ENCODE measurements at regions of chr1 and their contacts with region 1.

Region 1: DNA sequence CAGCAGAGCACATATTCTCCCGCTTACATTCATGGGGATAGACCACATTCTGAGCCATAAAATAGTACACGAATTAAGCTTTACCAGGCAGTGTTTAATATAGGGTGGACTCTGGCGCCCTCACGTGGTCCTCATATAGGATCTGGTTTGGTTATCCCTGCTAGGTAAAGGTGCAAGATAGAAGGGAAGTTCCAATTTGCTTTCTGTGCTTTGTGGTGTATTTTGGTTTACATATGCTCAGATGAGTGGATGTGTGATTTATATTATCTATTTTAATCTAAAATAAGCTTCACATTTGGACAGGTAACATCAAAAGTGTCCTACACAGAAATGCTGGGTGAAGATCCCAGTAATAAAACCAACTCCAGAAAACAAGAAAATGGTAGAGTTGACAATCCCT is 3.6 kb downstream of the CR1 start:
- DNase-seq: peak; percentile 37
- H3K4me3 Mint-ChIP-seq: no peak overlapping the region
- H3K27ac Mint-ChIP-seq: peak overlapping the region; percentile 3
- H3K4me1 Mint-ChIP-seq: peaks cover 21% of the 10 kb centered on the region
- H3K27me3 Mint-ChIP-seq: peaks cover 56% of the 10 kb centered on the region

Region 2: DNA sequence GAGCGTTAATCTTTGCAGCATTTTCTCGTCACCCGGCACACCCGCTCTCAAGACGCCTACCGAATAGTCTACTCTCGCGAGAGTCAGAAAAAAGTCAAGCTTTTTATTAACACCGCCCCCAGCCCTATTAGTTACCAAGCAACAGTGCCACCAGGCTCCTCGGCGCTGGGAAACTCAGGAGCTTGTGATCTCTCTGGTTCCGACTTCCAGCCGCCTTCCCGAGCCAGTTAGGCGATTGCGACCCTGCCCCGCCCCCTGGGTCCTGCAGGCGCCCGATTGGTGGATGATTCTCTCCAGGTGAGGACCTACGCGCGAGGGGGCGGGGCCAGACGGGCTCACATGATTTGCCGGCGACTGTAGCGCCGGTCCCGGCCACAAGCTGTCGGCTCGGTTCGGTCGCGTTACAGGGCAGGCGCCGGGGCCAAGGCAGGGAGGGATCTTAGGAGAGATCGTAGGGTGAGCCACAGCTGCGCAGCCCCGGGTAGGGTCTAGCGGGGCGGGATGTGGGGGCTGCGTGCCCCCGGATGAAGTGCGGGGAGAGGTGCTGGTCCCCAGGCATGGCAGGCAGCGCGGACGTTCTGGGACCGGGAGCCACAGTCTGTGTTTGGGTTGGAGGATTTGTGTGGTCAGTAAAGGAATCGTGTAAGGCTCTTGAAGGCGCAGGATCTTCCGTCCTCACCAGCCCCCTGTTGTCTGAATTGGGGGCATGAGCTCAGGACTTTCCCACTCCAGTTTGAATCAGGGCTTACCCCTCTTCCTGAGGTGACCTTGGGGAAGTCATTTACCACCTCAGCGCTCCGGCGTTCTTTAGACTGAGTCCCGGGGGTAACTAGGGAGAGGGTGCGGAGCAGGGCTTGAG is 446.4 kb before region 1 on chr1 and contains the start of gene PFKFB2:
- intact Hi-C with region 1: loop called (anchors 1 kb)
- DNase-seq: peak; percentile 90
- H3K4me3 Mint-ChIP-seq: peak within 1 kb of the TSS; percentile 91
- H3K27ac Mint-ChIP-seq: peak within 1 kb of the TSS; percentile 75
- H3K4me1 Mint-ChIP-seq: peaks cover 30% of the 10 kb centered on the region
- H3K27me3 Mint-ChIP-seq: peaks cover 7% of the 10 kb centered on the region
- total RNA-seq, gene PFKFB2: 1.9 and 2.2 TPM in 2 replicates

Region 3: DNA sequence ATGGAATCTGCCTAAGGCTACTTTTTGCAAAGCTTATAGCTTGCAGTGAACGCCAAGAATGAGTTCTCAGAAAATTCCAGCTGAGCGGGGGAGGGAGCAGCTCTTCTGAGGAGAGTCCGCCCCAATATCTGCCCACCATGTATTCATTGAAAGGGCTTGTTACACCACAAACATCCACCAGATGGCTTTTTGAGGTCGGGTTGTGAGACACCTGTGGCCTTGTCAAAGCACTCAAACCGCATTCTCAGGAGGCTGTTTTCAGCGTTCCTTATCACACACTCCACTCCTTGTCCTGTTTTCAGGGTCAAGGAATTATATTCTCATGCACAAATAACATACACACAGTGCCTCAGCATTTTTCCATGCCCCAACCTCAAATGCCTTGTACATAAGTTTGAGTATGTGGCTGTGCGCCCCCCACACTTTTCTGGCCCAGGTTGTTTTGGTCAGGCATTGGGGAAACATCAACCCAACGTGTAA is 414.8 kb before region 1 on chr1:
- intact Hi-C with region 1: loop called (anchors 1 kb)
- DNase-seq: peak; percentile 26
- H3K4me3 Mint-ChIP-seq: no peak overlapping the region
- H3K27ac Mint-ChIP-seq: no peak overlapping the region
- H3K4me1 Mint-ChIP-seq: peaks cover 27% of the 10 kb centered on the region
- H3K27me3 Mint-ChIP-seq: peaks cover 31% of the 10 kb centered on the region

Region 4: GRCh38 chr1:207412845-207413244 is 86.7 kb before region 1 on chr1:
- intact Hi-C with region 1: loop called (anchors 1 kb)
- DNase-seq: no peak
- H3K4me3 Mint-ChIP-seq: no peak overlapping the region
- H3K27ac Mint-ChIP-seq: no peak overlapping the region
- H3K4me1 Mint-ChIP-seq: peaks cover 40% of the 10 kb centered on the region
- H3K27me3 Mint-ChIP-seq: peaks cover 2% of the 10 kb centered on the region

Region 5: DNA sequence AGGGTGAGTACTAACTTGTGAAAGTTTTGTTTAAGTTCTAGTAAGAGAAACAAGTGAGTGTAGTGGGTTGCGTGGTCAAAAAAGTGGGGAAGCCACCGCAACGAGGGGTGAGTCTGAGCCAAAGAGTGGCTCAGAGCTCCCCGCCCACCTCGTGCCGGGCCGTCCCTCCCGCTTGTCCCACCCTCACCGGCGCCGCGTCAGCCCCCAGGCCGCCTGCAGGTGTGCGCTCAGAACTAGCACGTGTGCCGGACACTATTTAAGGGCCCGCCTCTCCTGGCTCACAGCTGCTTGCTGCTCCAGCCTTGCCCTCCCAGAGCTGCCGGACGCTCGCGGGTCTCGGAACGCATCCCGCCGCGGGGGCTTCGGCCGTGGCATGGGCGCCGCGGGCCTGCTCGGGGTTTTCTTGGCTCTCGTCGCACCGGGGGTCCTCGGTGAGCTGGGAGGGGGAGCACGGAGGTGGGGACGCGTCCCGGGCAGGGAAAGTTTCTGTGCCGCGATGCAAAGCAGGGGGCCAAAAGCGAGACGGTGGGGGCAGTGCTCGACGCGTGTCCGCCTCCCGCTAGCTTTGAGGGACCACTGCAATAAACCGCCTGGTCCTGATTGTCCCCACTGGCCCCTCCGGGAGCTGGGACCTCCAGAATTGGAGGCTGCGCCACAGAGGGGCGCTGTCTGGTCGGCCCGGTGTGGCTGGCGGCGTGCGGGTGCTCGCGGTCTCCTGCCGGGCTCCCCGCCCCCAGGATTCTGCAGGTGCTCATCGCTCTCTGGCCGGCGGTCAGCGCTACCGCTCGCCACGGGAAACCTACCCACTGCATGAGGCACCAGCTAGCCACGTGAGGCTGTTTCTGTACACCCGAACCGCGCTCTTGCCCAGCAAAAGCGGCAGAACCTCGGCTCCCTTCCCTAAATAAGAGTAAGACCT is 45.3 kb before region 1 on chr1 and contains the start of gene CR2:
- intact Hi-C with region 1: loop called (anchors 5 kb)
- DNase-seq: no peak
- H3K4me3 Mint-ChIP-seq: peak within 1 kb of the TSS; percentile 37
- H3K27ac Mint-ChIP-seq: no peak within 1 kb of the TSS
- H3K4me1 Mint-ChIP-seq: peaks cover 10% of the 10 kb centered on the region
- H3K27me3 Mint-ChIP-seq: peaks cover 47% of the 10 kb centered on the region
- total RNA-seq, gene CR2: not detected in 2 replicates

Measured in activated T-helper 2 cell treated with anti-CD3 and anti-CD28 coated beads, Interferon-gamma antibody, Interleukin-2, Interleukin-4, amounts not matched to agents 10 μg/mL and 5 μg/mL and 100 μg/mL, durations not matched to agents 14 hours and 24 hours and 36 hours (primary cell).